ENCODE measurements at regions of chr10 and their contacts with region 1.

Region 1: GRCh38 chr10:32256613-32257437 is 90.1 kb downstream of the EPC1 start:
- DNase-seq: peak; percentile 52
- ATAC-seq: peak; percentile 88
- H3K4me3 Mint-ChIP-seq: no peak overlapping the region
- H3K27ac Mint-ChIP-seq: no peak overlapping the region
- H3K4me1 Mint-ChIP-seq: peaks cover 6% of the 10 kb centered on the region
- H3K27me3 Mint-ChIP-seq: no peaks in the 10 kb centered on the region
- CTCF ChIP-seq: peak; percentile 20

Region 2: GRCh38 chr10:31928549-31929260 is 328.1 kb before region 1 on chr10 and contains the start of gene ARHGAP12:
- CTCF ChIA-PET with region 1: no interaction called
- POLR2A ChIA-PET with region 1: no interaction called
- intact Hi-C with region 1: no loop called
- DNase-seq: peak; percentile 97
- ATAC-seq: peak; percentile 74
- H3K4me3 Mint-ChIP-seq: peak within 1 kb of the TSS; percentile 91
- H3K27ac Mint-ChIP-seq: peak within 1 kb of the TSS; percentile 88
- H3K4me1 Mint-ChIP-seq: peaks cover 44% of the 10 kb centered on the region
- H3K27me3 Mint-ChIP-seq: no peaks in the 10 kb centered on the region
- CTCF ChIP-seq: no peak
- total RNA-seq, gene ARHGAP12: 23.2 and 27.3 TPM in 2 replicates

Region 3: GRCh38 chr10:32190890-32191491 is 65.8 kb before region 1 on chr10:
- CTCF ChIA-PET with region 1: no interaction called
- POLR2A ChIA-PET with region 1: no interaction called
- intact Hi-C with region 1: loop called (anchors 1 kb)
- DNase-seq: no peak
- ATAC-seq: peak; percentile 75
- H3K4me3 Mint-ChIP-seq: no peak overlapping the region
- H3K27ac Mint-ChIP-seq: peak overlapping the region; percentile 75
- H3K4me1 Mint-ChIP-seq: peaks cover 4% of the 10 kb centered on the region
- H3K27me3 Mint-ChIP-seq: peaks cover 6% of the 10 kb centered on the region
- CTCF ChIP-seq: no peak

Region 4: GRCh38 chr10:32713560-32713959 is 456.7 kb after region 1 on chr10:
- CTCF ChIA-PET with region 1: no interaction called
- POLR2A ChIA-PET with region 1: no interaction called
- intact Hi-C with region 1: no loop called
- DNase-seq: no peak
- ATAC-seq: no peak
- H3K4me3 Mint-ChIP-seq: no peak overlapping the region
- H3K27ac Mint-ChIP-seq: no peak overlapping the region
- H3K4me1 Mint-ChIP-seq: no peaks in the 10 kb centered on the region
- H3K27me3 Mint-ChIP-seq: no peaks in the 10 kb centered on the region
- CTCF ChIP-seq: no peak

Measured in activated B cell treated with CpG ODN at 0.5 μM for 24 hours (primary cell).